CD14-positive monocyte (primary cell): ENCODE measurements at regions of chr12 and their contacts with region 1.

Region 1: GRCh38 chr12:49707128-49707811 is at the start of gene FMNL3:
- DNase-seq: peak; percentile 96 to 97 (median 96)
- H3K4me3 ChIP-seq: peak within 1 kb of the TSS; percentile 58 to 81 (median 80)
- H3K4me3 Mint-ChIP-seq: peak within 1 kb of the TSS; percentile 96
- H3K27ac ChIP-seq: peak within 1 kb of the TSS in 1 of 2 donors; percentile 73
- H3K27ac Mint-ChIP-seq: peak within 1 kb of the TSS in 5 of 7 donors; percentile 31 to 86 (median 82)
- H3K4me1 ChIP-seq: peaks cover 35 to 42% of the 10 kb centered on the region in 2 donors
- H3K4me1 Mint-ChIP-seq: peaks cover 43% of the 10 kb centered on the region
- H3K27me3 ChIP-seq: peaks cover 0 to 6% of the 10 kb centered on the region in 2 donors
- H3K27me3 Mint-ChIP-seq: peaks cover 10 to 21% (median 15%) of the 10 kb centered on the region in 3 donors
- CTCF ChIP-seq: peak; percentile 95
- polyA plus RNA-seq, gene FMNL3: 1.5 to 5.4 (median 1.7) TPM

Region 2: GRCh38 chr12:49644620-49644994 is 62.7 kb before region 1 on chr12:
- intact Hi-C with region 1: loop called (anchors 1 kb)
- DNase-seq: peak; percentile 72 to 87 (median 82)
- H3K4me3 ChIP-seq: no peak overlapping the region
- H3K4me3 Mint-ChIP-seq: no peak overlapping the region
- H3K27ac ChIP-seq: no peak overlapping the region
- H3K27ac Mint-ChIP-seq: peak overlapping the region in 4 of 7 donors; percentile 35 to 66 (median 50)
- H3K4me1 ChIP-seq: peaks cover 4 to 6% of the 10 kb centered on the region in 2 donors
- H3K4me1 Mint-ChIP-seq: peaks cover 8% of the 10 kb centered on the region
- H3K27me3 ChIP-seq: no peaks in the 10 kb centered on the region
- H3K27me3 Mint-ChIP-seq: peaks cover 0 to 3% (median 1%) of the 10 kb centered on the region in 3 donors
- CTCF ChIP-seq: peak; percentile 97

Region 3: GRCh38 chr12:49662998-49663843 is 44.0 kb before region 1 on chr12:
- intact Hi-C with region 1: loop called in 1 of 2 experiments (anchors 5 kb)
- DNase-seq: peak; percentile 77 to 94 (median 84)
- H3K4me3 ChIP-seq: peak overlapping the region in 1 of 3 experiments; percentile 65
- H3K4me3 Mint-ChIP-seq: peak overlapping the region; percentile 60 to 86
- H3K27ac ChIP-seq: peak overlapping the region; percentile 52 to 81
- H3K27ac Mint-ChIP-seq: peak overlapping the region; percentile 82 to 96 (median 89)
- H3K4me1 ChIP-seq: peaks cover 45 to 51% of the 10 kb centered on the region in 2 donors
- H3K4me1 Mint-ChIP-seq: peaks cover 58% of the 10 kb centered on the region
- H3K27me3 ChIP-seq: no peaks in the 10 kb centered on the region
- H3K27me3 Mint-ChIP-seq: peaks cover 0 to 6% (median 2%) of the 10 kb centered on the region in 3 donors
- CTCF ChIP-seq: no peak

Region 4: GRCh38 chr12:49740930-49741881 is 33.9 kb after region 1 on chr12 and contains the start of gene TMBIM6:
- intact Hi-C with region 1: loop called in 1 of 2 experiments (anchors 5 kb)
- DNase-seq: peak; percentile 100
- H3K4me3 ChIP-seq: peak within 1 kb of the TSS; percentile 62 to 88 (median 65)
- H3K4me3 Mint-ChIP-seq: peak within 1 kb of the TSS; percentile 95 to 99
- H3K27ac ChIP-seq: peak within 1 kb of the TSS; percentile 94 to 98
- H3K27ac Mint-ChIP-seq: peak within 1 kb of the TSS; percentile 99 to 100 (median 100)
- H3K4me1 ChIP-seq: peaks cover 24 to 38% of the 10 kb centered on the region in 2 donors
- H3K4me1 Mint-ChIP-seq: peaks cover 30% of the 10 kb centered on the region
- H3K27me3 ChIP-seq: no peaks in the 10 kb centered on the region
- H3K27me3 Mint-ChIP-seq: peaks cover 0 to 2% (median 2%) of the 10 kb centered on the region in 3 donors
- CTCF ChIP-seq: peak; percentile 94
- polyA plus RNA-seq, gene TMBIM6: 315 to 1,453 (median 1,396) TPM

Region 5: DNA sequence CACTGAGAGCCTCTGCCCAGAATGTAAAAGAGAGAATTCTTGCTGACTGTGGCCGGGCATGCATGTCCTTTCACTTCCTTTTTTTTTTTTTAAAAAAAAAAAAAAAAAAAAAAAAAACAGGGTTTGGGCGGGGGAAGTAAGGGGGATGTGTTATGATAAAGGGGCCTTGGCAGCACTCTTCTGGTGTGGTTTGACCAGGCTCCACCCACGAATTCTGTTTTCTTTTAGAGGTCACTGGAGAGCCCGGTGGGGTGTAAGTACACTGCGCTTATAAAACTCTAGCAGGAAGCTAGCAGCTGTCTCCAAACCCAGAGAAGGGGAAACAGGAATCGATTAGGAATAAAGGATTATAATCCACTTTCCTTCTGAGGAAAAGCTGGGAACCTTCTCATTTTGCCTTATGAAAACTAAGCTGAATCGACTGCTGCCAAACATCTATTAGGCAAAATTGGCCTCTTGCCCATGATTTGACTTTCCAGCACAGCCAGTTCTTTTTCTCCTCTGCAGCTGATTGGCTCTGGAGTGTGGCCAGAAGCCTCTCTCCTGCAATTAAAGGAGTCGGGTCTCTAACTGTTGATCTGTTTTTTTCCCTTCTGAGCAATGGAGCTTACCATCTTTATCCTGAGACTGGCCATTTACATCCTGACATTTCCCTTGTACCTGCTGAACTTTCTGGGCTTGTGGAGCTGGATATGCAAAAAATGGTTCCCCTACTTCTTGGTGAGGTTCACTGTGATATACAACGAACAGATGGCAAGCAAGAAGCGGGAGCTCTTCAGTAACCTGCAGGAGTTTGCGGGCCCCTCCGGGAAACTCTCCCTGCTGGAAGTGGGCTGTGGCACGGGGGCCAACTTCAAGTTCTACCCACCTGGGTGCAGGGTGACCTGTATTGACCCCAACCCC is 1217.4 kb after region 1 on chr12:
- intact Hi-C with region 1: loop called in 1 of 2 experiments (anchors 10 kb)
- DNase-seq: peak; percentile 70 to 76 (median 72)
- H3K4me3 ChIP-seq: peak overlapping the region; percentile 59 to 98 (median 87)
- H3K4me3 Mint-ChIP-seq: peak overlapping the region; percentile 98 to 100
- H3K27ac ChIP-seq: peak overlapping the region; percentile 50 to 83
- H3K27ac Mint-ChIP-seq: peak overlapping the region; percentile 95 to 98 (median 96)
- H3K4me1 ChIP-seq: peaks cover 41 to 59% of the 10 kb centered on the region in 2 donors
- H3K4me1 Mint-ChIP-seq: peaks cover 62% of the 10 kb centered on the region
- H3K27me3 ChIP-seq: no peaks in the 10 kb centered on the region
- H3K27me3 Mint-ChIP-seq: peaks cover 0 to 2% (median 0%) of the 10 kb centered on the region in 3 donors
- CTCF ChIP-seq: no peak